ENCODE measurements at regions of chr7 and their contacts with region 1.

Region 1: DNA sequence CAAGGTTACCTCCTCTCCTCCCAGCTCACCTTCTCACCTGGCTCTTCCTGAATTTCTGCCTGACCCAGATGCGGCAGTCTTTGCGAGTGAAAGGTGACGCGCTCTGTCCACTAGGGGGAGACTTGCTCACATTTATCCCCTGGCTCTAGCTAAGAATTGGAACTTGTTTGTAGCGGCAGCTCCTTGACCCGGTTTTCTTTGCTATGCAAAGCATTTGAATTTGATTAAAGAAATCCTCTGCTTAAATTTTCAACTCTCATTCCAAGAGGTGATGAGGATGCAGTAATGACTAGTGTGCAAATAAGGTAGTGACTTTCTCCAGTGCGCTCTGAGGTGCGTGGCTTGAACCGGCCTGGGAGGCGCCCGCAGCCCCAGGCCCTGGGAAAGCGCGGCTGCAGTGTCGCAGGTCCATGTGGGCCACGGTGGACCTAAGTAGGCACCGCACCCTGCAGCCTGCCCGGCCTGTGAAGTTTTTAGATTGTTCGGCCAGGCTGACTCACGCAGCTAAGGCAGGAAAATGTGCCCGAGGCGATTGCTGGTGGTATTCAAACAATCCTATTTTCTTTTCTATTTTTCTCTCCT is 336.9 kb upstream of the NPSR1 start:
- DNase-seq: peak; percentile 67
- ATAC-seq: peak; percentile 97
- H3K4me3 ChIP-seq: peak overlapping the region in 2 of 3 experiments; percentile 33 to 38; a peak in 2 of 6 replicates
- H3K27ac ChIP-seq: no peak overlapping the region
- H3K4me1 ChIP-seq: peaks cover 6% of the 10 kb centered on the region; the same call in 1 of the 2 replicates
- H3K27me3 ChIP-seq: 0 out of 5 replicates have a peak, but pooled peaks cover 0 to 3% of the 10 kb centered on the region in 2 experiments
- CTCF ChIP-seq: peak; percentile 88
- EP300 ChIP-seq: no peak
- POLR2A ChIP-seq: no peak
- RAD21 ChIP-seq: peak; percentile 82

Region 2: DNA sequence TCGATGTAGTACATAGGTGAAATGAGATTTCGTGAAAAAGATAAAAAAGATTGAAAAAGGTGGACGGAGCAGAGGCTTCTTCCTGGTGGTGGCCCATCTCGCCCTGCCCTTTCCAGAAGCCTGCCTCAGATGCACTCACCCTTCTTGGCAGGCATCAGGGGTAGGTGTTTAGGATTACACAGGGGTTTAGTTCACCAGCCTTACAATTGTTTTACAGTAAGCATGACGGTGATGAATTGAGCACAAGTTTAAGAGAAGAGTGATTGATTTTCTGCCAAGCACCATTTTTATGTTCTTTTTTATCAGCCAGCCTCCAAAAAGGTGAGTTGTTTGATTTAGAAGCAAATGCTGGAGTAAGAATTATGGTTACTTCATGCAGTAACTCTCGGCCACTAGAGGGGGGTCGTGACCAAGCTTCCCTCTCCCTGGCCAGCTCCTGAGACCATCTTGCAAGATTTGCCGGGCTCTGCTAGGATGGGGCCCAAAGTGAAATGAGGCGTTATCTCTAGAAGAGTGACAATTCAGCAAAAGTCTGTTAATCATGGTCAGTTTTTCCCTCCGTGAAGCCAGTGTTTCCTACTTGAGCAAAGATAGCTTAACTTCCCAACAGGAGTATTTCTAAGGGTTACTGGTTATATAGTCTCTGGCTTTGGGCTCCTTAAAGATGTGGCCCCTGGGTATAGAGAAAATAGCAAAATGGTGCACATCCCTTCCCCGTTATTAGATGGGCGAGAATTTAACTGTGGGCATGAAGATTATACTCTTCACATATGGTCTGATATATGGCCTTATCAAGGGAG is 186.9 kb before region 1 on chr7:
- CTCF ChIA-PET with region 1: no interaction called
- POLR2A ChIA-PET with region 1: no interaction called
- in situ Hi-C with region 1: no loop called
- intact Hi-C with region 1: loop called (anchors 10 kb)
- DNase-seq: peak; percentile 18
- ATAC-seq: peak; percentile 84
- H3K4me3 ChIP-seq: no peak overlapping the region
- H3K27ac ChIP-seq: no peak overlapping the region
- H3K4me1 ChIP-seq: no peaks in the 10 kb centered on the region
- H3K27me3 ChIP-seq: peaks cover 0 to 7% of the 10 kb centered on the region in 2 experiments; a peak in 1 of 5 replicates
- CTCF ChIP-seq: peak; percentile 79
- EP300 ChIP-seq: no peak
- POLR2A ChIP-seq: no peak
- RAD21 ChIP-seq: 0 out of 2 replicates have a peak, but pooled peaks have one; percentile 14

Region 3: DNA sequence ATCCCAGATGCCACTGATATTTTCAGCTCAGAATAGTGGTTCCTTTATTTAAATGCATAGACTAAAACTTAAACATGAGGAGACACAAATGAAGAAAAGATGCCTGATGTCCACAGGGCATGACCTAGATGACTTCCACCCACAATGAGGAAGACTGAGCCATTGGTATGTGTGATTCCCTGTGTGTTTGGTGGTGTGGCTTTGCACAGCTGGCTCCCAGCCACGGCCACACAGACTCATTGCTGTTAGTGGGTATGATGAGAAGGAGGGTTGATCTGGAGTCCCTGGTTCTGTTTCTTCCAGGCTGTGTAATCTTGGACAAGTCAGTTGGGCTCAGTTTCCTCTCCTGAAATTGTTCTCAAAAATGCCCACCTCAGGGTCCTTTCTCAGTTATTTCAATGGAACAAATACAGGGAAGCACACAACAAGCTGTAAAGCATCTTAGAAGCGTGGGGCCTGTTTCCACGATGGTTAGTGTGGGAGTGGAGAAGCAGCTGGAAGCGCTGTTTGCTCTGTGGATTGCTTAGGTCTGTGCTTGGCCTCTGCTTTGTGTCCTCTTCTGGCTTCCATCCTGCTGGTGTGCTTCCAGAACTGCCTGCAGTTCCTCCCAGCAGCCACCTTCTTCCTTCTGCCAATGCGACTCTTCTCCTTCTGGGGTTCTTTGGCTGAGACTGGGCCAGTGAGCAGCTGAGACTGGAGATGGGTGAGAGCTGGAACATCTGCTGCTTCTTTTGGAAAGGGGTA is 112.0 kb before region 1 on chr7:
- CTCF ChIA-PET with region 1: no interaction called
- POLR2A ChIA-PET with region 1: no interaction called
- in situ Hi-C with region 1: no loop called
- intact Hi-C with region 1: no loop called
- DNase-seq: no peak
- ATAC-seq: no peak
- H3K4me3 ChIP-seq: no peak overlapping the region
- H3K27ac ChIP-seq: no peak overlapping the region
- H3K4me1 ChIP-seq: no peaks in the 10 kb centered on the region
- H3K27me3 ChIP-seq: peaks cover 0 to 3% of the 10 kb centered on the region in 2 experiments; a peak in 1 of 5 replicates
- CTCF ChIP-seq: no peak
- EP300 ChIP-seq: no peak
- POLR2A ChIP-seq: no peak
- RAD21 ChIP-seq: no peak

Region 4: DNA sequence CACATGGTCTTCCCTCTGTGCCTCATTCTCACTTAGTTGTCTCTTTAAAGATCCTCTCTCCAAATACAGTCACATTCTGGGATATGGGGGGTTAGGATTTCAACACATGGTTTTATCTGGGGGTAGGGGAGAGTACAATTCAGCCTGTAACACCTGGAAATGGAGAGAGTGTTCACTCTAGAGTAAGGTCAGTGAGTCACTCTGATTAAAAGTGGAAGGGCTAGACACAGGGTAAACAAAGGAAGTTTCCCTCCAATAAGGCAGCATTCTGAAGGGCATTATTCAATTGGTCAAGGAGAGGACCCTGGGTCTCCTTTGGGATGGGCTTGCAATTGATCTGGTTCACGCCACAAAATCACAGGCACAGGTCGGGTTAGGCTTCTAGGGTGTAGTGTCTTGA is 104.1 kb after region 1 on chr7:
- CTCF ChIA-PET with region 1: interaction called, 28 read pairs
- POLR2A ChIA-PET with region 1: no interaction called
- in situ Hi-C with region 1: loop called (anchors 5 kb)
- intact Hi-C with region 1: loop called (anchors 1 kb)
- DNase-seq: peak; percentile 39
- ATAC-seq: peak; percentile 54
- H3K4me3 ChIP-seq: no peak overlapping the region
- H3K27ac ChIP-seq: peak overlapping the region; percentile 58
- H3K4me1 ChIP-seq: peaks cover 25% of the 10 kb centered on the region
- H3K27me3 ChIP-seq: no peaks in the 10 kb centered on the region
- CTCF ChIP-seq: no peak
- EP300 ChIP-seq: no peak; a peak in 1 of 4 replicates
- POLR2A ChIP-seq: no peak
- RAD21 ChIP-seq: no peak

Region 5: DNA sequence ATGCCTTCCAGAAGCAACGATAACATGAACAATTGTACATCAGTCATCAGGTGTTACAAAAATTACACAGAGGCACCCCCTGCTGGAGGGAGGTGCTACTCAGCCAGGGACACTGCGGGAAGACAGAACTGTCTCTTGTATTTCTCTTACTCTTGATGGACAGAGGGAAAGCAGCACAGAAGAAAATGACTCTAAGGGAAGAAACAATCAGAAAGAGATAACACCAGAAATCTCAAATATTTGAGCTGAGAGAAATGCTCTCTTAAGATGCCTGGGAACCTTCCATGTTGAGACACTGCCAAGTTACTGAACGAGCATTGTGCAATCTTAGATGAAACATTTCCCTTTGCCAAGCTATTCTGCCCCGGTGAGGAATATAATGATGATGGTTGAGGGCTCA is 109.4 kb after region 1 on chr7:
- CTCF ChIA-PET with region 1: interaction called, 28 read pairs
- POLR2A ChIA-PET with region 1: no interaction called
- in situ Hi-C with region 1: loop called (anchors 5 kb)
- intact Hi-C with region 1: loop called (anchors 1 kb)
- DNase-seq: peak; percentile 41
- ATAC-seq: peak; percentile 67
- H3K4me3 ChIP-seq: no peak overlapping the region
- H3K27ac ChIP-seq: no peak overlapping the region
- H3K4me1 ChIP-seq: peaks cover 17% of the 10 kb centered on the region
- H3K27me3 ChIP-seq: no peaks in the 10 kb centered on the region
- CTCF ChIP-seq: peak; percentile 56
- EP300 ChIP-seq: no peak
- POLR2A ChIP-seq: no peak
- RAD21 ChIP-seq: peak; percentile 33; the same call in 1 of the 2 replicates

Region 6: GRCh38 chr7:34596892-34597291 is 275.8 kb after region 1 on chr7:
- CTCF ChIA-PET with region 1: interaction called, 11 read pairs
- POLR2A ChIA-PET with region 1: no interaction called
- in situ Hi-C with region 1: loop called (anchors 5 kb)
- intact Hi-C with region 1: loop called (anchors 1 kb)
- DNase-seq: peak; percentile 15
- ATAC-seq: peak; percentile 66
- H3K4me3 ChIP-seq: no peak overlapping the region
- H3K27ac ChIP-seq: no peak overlapping the region
- H3K4me1 ChIP-seq: no peaks in the 10 kb centered on the region
- H3K27me3 ChIP-seq: no peaks in the 10 kb centered on the region
- CTCF ChIP-seq: peak; percentile 58
- EP300 ChIP-seq: no peak
- POLR2A ChIP-seq: no peak
- RAD21 ChIP-seq: no peak